ENCODE measurements at regions of chr3 and their contacts with region 1.

Region 1: DNA sequence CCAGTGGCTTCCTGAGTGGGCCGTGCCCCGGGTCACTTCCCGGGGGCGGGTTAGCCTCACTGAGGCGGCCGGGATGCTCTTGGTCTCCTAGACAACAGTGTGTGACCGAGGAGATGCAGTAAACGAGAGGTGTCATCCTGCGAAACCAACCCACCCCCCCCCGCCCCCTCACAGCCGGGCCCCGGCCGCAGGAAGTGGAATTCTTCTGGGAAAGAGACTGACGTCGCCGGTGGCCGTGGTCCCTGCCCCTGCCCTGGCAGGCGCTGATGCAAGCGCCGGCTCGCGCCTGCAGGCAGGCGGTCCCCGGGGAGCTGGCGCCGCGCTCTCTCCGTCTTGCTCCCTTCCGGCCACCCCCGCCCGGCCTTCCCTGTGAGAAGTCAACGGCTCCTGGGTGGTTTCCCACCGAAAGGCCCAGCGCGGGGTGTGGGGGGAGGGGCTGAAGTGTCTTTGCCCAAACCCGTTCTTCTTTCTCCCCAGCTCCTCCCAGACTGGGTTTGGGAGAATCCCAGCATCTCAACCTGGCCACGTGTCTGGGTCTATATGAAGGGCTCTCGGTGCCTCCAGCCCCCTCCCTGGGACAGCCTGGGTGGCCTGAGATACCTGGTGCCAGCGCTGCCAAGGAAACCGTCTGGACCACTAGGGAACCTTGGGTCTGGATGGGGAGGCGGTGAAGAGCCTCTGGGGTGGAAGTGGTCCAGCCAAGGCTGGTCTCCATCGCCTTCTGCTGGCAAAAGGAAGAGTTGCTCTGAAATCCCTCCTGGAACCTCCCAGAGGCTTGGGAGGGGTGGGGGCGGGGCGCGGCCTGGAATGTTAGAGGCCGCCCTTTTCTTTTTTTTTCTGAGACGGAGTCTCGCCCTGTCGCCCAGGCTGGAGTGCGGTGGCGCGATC is 47.3 kb downstream of the BHLHE40 start:
- DNase-seq: peak; percentile 88
- ATAC-seq: peak; percentile 37
- H3K4me3 Mint-ChIP-seq: peak overlapping the region; percentile 69
- H3K27ac Mint-ChIP-seq: peak overlapping the region; percentile 84
- H3K4me1 Mint-ChIP-seq: peaks cover 58% of the 10 kb centered on the region
- H3K27me3 Mint-ChIP-seq: peaks cover 6% of the 10 kb centered on the region

Region 2: GRCh38 chr3:4722103-4722502 is 304.5 kb before region 1 on chr3:
- CTCF ChIA-PET with region 1: interaction called, 4 read pairs
- POLR2A ChIA-PET with region 1: interaction called, 4 read pairs
- intact Hi-C with region 1: loop called in 1 of 2 experiments (anchors 1 kb)
- DNase-seq: peak; percentile 58
- ATAC-seq: peak; percentile 93
- H3K4me3 Mint-ChIP-seq: no peak overlapping the region
- H3K27ac Mint-ChIP-seq: peak overlapping the region; percentile 51
- H3K4me1 Mint-ChIP-seq: peaks cover 32% of the 10 kb centered on the region
- H3K27me3 Mint-ChIP-seq: no peaks in the 10 kb centered on the region

Region 3: DNA sequence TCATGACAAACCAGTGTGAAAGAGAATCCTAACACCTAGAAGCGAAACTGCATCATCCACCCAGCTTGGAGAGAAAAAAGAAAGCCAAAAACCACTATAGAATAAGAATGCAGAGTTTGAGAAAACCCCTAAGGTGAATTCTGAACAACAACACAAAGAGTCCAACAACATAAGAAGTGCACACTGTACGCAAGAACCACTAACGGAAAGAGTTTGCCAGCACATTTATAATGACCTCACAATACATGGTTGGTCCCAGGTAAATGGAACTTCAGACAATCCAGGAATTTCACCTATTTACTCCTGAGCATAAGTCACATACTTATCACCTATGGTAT is 175.7 kb before region 1 on chr3:
- CTCF ChIA-PET with region 1: interaction called, 4 read pairs
- POLR2A ChIA-PET with region 1: interaction called, 21 read pairs
- intact Hi-C with region 1: loop called (anchors 1 to 2 kb)
- DNase-seq: peak; percentile 56
- ATAC-seq: peak; percentile 72
- H3K4me3 Mint-ChIP-seq: peak overlapping the region; percentile 39
- H3K27ac Mint-ChIP-seq: peak overlapping the region; percentile 98
- H3K4me1 Mint-ChIP-seq: peaks cover 84% of the 10 kb centered on the region
- H3K27me3 Mint-ChIP-seq: no peaks in the 10 kb centered on the region

Region 4: DNA sequence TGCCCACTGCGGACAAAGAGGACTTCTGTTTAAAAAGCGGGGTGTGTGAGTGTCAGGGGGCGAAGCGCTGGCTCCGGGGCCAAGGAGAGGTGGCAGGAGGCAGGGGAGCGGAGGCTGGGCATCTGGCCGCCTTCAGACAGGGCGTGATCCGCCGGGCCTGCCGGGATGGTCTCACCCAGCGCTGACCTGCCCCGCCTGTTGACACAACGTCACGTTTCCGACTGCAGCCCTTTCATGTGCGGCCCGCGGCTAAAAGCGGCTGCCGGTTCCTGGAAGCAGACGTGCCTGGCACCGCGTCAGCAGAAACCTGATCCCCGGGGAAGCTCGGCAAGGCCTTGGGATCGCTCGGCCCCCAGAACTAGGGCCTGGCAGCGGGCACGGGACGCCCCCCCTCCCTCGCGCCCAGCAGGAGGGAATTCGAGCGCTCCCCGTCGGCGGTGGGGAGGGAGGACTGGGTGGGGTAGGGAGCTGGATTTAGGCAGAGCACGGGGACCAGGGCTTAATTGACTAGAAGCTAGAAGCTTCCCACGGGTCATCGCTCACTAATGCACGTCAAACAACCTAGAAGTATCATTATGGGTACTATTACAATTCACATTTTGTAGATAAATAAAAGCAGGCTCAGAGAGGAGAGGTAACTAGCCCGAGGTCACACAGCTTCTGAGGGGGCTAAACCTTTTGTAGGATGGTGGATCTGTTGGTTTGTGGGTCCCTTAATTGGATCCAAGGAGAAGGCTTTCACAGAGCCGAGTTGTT is 39.6 kb before region 1 on chr3:
- CTCF ChIA-PET with region 1: interaction called, 76 read pairs
- POLR2A ChIA-PET with region 1: interaction called, 16 read pairs
- intact Hi-C with region 1: loop called (anchors 1 kb)
- DNase-seq: peak; percentile 87
- ATAC-seq: peak; percentile 55
- H3K4me3 Mint-ChIP-seq: peak overlapping the region; percentile 72
- H3K27ac Mint-ChIP-seq: peak overlapping the region; percentile 76
- H3K4me1 Mint-ChIP-seq: peaks cover 56% of the 10 kb centered on the region
- H3K27me3 Mint-ChIP-seq: no peaks in the 10 kb centered on the region

Region 5: DNA sequence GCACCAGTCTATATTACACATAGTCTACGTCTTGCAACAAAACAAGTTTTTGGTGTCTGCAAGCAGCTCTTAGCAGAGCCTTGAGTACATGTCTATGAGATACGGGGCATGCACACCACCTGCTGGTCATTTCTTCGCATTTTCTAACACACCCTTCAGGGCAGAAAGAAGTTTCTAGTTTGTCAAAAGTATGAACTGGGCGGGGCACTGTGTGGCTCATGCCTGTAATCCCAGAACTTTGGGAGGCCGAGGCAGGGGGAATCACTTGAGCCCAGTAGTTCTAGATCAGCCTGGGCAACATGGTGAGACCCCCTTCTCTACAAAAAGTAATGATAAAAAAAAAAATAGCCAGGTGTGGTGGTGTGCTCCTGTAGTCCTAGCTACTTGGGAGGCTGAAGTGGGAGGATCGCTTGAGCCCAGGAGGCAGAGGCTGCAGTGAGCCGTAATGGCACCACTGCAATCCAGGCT is 31.3 kb after region 1 on chr3:
- CTCF ChIA-PET with region 1: interaction called, 4 read pairs
- POLR2A ChIA-PET with region 1: no interaction called
- intact Hi-C with region 1: loop called in 1 of 2 experiments (anchors 1 kb)
- DNase-seq: peak; percentile 87
- ATAC-seq: peak; percentile 96
- H3K4me3 Mint-ChIP-seq: no peak overlapping the region
- H3K27ac Mint-ChIP-seq: peak overlapping the region; percentile 11
- H3K4me1 Mint-ChIP-seq: peaks cover 17% of the 10 kb centered on the region
- H3K27me3 Mint-ChIP-seq: peaks cover 8% of the 10 kb centered on the region

Measured in activated CD4-positive, alpha-beta T cell treated with anti-CD3 and anti-CD28 coated beads for 36 hours (primary cell).